H1 (cell line): ENCODE measurements at regions of chr3 and their contacts with region 1.

Region 1: DNA sequence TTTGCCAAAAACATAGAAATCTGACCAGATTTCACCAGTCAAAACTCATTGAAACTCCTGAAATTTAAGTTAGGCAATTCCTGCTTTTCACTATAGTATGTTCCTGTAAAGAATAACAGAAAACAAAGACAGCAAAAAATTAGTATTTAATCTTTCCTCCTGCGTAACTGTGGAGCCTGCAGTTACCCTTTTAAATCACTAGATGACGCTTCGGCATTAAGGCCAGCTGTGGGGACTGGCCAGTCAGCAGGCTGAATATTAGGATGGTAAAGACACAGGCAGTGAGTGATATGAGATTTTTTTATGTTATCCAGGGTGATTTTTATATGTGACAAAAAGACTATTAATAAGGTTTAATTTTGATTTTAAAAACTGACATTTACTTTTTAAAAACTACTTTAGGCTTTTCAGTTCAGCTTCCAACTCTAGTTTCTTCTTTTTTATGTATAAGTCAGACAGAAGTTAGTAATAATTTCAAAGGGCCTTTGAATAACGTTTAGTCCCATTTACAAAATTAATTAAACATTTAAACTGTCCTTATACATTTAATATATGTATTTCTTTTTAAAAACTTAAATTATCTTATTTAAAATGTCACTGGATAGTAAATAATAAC is 165.1 kb downstream of the PPM1L start:
- DNase-seq: no peak
- H3K4me3 ChIP-seq: no peak overlapping the region
- H3K27ac ChIP-seq: no peak overlapping the region
- H3K4me1 ChIP-seq: no peaks in the 10 kb centered on the region
- H3K27me3 ChIP-seq: no peaks in the 10 kb centered on the region
- CTCF ChIP-seq: peak; percentile 58 to 73 (median 69)
- EP300 ChIP-seq: no peak
- POLR2A ChIP-seq: no peak
- RAD21 ChIP-seq: peak; percentile 81 to 84

Region 2: DNA sequence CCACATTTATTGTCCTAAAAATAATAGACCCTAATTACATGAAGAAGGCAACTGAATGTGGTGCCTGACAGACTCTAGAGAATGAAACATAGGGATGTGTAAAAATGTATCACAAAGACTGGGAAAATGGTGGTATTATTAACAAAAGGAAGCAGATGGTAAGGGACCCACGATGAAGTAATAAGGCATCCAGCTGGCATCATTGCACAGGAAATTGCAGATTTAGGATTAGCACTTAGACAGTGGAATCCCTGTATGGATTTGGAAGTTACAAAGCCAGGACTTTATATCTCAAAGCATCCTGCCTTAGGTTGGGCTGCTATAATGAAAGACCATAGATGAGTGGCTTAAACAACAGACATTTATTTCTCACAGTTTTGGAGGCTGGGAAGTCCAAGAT is 60.8 kb before region 1 on chr3:
- CTCF ChIA-PET with region 1: no interaction called
- POLR2A ChIA-PET with region 1: no interaction called
- DNase-seq: no peak
- H3K4me3 ChIP-seq: no peak overlapping the region
- H3K27ac ChIP-seq: no peak overlapping the region
- H3K4me1 ChIP-seq: no peaks in the 10 kb centered on the region
- H3K27me3 ChIP-seq: no peaks in the 10 kb centered on the region
- CTCF ChIP-seq: no peak
- EP300 ChIP-seq: no peak
- POLR2A ChIP-seq: no peak
- RAD21 ChIP-seq: no peak

Region 3: GRCh38 chr3:160904691-160905090 is 16.4 kb before region 1 on chr3:
- CTCF ChIA-PET with region 1: interaction called, 15 read pairs
- POLR2A ChIA-PET with region 1: no interaction called
- DNase-seq: no peak
- H3K4me3 ChIP-seq: no peak overlapping the region
- H3K27ac ChIP-seq: no peak overlapping the region
- H3K4me1 ChIP-seq: peaks cover 0 to 7% (median 1%) of the 10 kb centered on the region in 4 experiments; a peak in 2 of 7 replicates
- H3K27me3 ChIP-seq: no peaks in the 10 kb centered on the region
- CTCF ChIP-seq: no peak
- EP300 ChIP-seq: no peak
- POLR2A ChIP-seq: no peak
- RAD21 ChIP-seq: no peak

Region 4: DNA sequence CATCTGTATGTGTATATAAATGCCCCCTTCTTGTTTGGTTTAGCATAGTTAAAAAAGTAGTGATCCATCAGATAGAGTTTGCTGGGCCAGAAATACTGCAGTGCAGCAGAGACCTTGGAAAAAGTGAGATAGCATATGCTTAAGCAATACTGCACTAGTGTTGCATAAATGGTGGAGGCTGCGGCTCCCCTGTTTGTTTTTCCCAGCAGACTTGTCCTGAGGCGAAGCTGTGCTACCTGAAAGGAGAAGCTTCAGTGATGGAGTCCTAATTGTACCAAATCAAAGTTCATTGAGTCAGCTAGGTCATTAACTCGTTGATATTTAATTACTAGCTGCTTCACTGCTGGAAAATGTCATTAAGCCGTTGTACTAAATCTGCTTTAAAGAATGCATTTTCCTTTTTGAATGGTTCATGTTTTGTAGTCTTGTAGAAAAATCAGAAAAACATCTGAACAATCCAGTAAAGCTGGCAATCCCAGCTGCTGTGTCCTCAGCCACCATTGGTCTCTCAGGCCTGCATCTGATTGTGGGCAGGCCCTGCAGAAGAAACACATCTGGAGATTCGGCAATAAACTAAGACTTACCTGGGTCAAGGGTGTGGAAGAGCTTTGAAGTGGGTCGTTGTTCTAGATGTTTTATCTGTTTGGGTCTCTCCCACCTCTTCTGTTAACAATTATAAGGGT is 14.4 kb after region 1 on chr3:
- CTCF ChIA-PET with region 1: interaction called, 40 read pairs
- POLR2A ChIA-PET with region 1: no interaction called
- DNase-seq: no peak
- H3K4me3 ChIP-seq: no peak overlapping the region
- H3K27ac ChIP-seq: no peak overlapping the region
- H3K4me1 ChIP-seq: no peaks in the 10 kb centered on the region
- H3K27me3 ChIP-seq: no peaks in the 10 kb centered on the region
- CTCF ChIP-seq: no peak
- EP300 ChIP-seq: no peak
- POLR2A ChIP-seq: no peak
- RAD21 ChIP-seq: no peak

Region 5: DNA sequence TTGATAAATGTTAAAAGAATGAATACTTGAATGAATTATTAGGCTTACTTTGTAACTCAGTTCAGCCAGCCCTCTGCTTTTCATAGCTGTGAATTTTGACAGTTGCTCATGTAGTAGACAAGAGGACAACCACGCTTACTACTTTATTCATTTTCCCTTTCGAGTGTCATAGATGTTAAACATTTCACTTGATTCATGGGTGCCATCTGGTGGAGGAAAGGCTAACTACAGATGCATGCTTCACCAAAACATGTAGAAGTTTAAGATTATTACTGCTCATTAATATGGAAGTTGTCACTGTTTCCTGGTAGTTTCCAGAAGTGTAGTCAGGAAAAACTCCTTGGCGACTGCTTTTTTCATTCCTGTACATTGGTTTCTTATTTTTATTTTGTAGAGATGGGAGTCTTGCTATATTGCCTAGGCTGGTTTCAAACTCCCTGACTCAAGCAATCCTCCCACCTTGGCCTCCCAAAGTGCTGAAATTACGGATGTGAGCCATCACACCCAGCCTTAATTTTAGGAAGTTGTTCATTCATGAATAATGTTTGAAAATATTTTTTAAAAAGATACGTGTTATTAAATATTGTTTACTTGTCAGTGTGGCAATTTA is 20.9 kb after region 1 on chr3:
- CTCF ChIA-PET with region 1: interaction called, 47 read pairs
- POLR2A ChIA-PET with region 1: no interaction called
- DNase-seq: peak in 1 of 2 experiments; percentile 83
- H3K4me3 ChIP-seq: no peak overlapping the region
- H3K27ac ChIP-seq: no peak overlapping the region
- H3K4me1 ChIP-seq: no peaks in the 10 kb centered on the region
- H3K27me3 ChIP-seq: no peaks in the 10 kb centered on the region
- CTCF ChIP-seq: peak in 2 of 3 experiments; percentile 52 to 77; a peak in 2 of 4 replicates
- EP300 ChIP-seq: no peak
- POLR2A ChIP-seq: no peak
- RAD21 ChIP-seq: peak; percentile 83